Mammary epithelial cell (primary cell): ENCODE measurements at regions of chr20 and their contacts with region 1.

Region 1: DNA sequence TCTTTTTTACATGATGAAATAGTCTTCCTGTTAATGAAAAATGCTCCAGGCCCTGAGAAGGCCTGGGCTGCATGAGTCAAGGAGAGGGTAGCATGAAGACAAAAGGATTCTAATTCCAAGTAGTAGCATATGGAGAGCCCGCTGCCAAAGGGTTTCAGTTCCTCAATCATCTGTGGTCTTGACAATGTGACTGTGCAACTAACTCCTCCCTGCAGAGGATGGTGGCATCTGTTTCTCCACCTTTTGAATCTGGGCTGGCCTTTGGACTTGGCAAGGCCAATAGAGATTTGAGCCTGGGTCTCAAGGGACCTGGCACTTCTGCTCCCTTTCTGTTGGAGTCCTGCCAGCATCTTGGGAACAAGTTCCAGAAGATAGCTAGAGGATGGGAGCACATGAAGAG is 35.1 kb upstream of the ANKEF1 start:
- DNase-seq: no peak
- H3K4me3 ChIP-seq: no peak overlapping the region
- H3K27ac ChIP-seq: no peak overlapping the region
- H3K4me1 ChIP-seq: no peaks in the 10 kb centered on the region
- H3K27me3 ChIP-seq: no peaks in the 10 kb centered on the region
- CTCF ChIP-seq: no peak

Region 2: DNA sequence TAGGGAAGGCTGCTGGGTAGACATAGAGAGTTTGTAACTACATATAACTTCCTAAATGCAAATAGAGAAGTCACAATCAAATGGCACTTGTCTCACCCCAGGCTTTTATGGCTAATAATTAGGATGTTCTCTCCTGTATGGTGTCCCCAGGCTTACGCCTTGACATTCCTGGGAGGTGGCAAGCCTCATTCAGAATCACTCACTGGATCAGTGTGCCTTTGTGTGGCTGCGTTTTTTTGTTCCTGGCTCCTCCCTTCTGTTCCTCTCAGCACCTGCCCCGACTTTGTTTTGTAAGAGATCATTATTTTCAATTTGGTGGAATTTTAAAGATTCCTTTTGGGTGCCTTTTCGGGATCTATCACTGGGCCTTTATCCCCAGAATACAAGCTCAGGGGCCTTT is 479.6 kb before region 1 on chr20:
- CTCF ChIA-PET with region 1: interaction called, 20 read pairs
- dilution Hi-C with region 1: no loop called
- in situ Hi-C with region 1: no loop called
- intact Hi-C with region 1: no loop called
- DNase-seq: no peak
- H3K4me3 ChIP-seq: no peak overlapping the region
- H3K27ac ChIP-seq: no peak overlapping the region
- H3K4me1 ChIP-seq: peaks cover 6% of the 10 kb centered on the region
- H3K27me3 ChIP-seq: peaks cover 25% of the 10 kb centered on the region
- CTCF ChIP-seq: no peak